Thyroid gland (tissue), 4 donors: ENCODE measurements at regions of chr9 and their contacts with region 1.

Region 1: GRCh38 chr9:109320742-109321448 is at the start of gene EPB41L4B:
- DNase-seq: peak; percentile 96
- H3K4me3 ChIP-seq: peak within 1 kb of the TSS; percentile 35 to 62 (median 59)
- H3K27ac ChIP-seq: peak within 1 kb of the TSS; percentile 89 to 97 (median 93)
- H3K4me1 ChIP-seq: peaks cover 25 to 27% of the 10 kb centered on the region in 2 donors
- H3K27me3 ChIP-seq: no peaks in the 10 kb centered on the region
- CTCF ChIP-seq: peak; percentile 83 to 100 (median 98)
- POLR2A ChIP-seq: peak in 1 of 2 donors; percentile 72
- total RNA-seq, gene EPB41L4B: 56.4 to 72.7 (median 71.0) TPM

Region 2: DNA sequence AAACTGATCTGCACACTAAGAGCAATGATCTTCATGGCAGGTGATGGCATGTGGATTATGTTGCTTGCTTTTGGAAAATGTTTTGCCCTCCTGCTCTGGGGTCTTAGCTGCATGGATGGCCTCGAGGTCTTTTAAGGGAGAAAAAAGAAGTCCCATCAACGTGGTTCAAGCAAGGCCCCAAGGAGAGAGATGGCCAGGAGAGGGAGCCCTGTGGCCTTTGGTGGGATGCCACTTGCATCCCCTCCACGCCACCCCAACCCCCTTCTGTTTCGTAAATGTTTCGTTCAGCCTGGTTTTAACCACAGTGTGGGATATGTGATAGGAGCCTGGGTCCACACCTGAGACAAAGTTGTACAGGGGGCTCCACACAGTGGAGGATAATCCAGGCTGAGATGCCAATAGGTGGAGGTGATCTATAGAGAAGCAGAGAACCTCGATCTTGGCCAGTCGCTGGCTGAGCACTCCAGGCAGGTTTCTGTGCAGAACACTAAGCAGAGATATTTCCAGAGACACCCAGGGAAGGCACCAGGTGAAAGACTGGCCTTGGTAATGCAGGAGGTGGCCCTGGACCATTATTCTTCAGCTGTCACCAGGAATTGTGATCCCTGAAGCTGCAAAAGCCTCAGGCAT is 128.0 kb before region 1 on chr9:
- intact Hi-C with region 1: loop called (anchors 5 kb)
- DNase-seq: peak; percentile 83 to 85
- H3K4me3 ChIP-seq: no peak overlapping the region
- H3K27ac ChIP-seq: no peak overlapping the region
- H3K4me1 ChIP-seq: peaks cover 0 to 3% of the 10 kb centered on the region in 2 donors
- H3K27me3 ChIP-seq: no peaks in the 10 kb centered on the region
- CTCF ChIP-seq: peak in 5 of 6 experiments; percentile 19 to 90 (median 78)
- POLR2A ChIP-seq: no peak

Region 3: DNA sequence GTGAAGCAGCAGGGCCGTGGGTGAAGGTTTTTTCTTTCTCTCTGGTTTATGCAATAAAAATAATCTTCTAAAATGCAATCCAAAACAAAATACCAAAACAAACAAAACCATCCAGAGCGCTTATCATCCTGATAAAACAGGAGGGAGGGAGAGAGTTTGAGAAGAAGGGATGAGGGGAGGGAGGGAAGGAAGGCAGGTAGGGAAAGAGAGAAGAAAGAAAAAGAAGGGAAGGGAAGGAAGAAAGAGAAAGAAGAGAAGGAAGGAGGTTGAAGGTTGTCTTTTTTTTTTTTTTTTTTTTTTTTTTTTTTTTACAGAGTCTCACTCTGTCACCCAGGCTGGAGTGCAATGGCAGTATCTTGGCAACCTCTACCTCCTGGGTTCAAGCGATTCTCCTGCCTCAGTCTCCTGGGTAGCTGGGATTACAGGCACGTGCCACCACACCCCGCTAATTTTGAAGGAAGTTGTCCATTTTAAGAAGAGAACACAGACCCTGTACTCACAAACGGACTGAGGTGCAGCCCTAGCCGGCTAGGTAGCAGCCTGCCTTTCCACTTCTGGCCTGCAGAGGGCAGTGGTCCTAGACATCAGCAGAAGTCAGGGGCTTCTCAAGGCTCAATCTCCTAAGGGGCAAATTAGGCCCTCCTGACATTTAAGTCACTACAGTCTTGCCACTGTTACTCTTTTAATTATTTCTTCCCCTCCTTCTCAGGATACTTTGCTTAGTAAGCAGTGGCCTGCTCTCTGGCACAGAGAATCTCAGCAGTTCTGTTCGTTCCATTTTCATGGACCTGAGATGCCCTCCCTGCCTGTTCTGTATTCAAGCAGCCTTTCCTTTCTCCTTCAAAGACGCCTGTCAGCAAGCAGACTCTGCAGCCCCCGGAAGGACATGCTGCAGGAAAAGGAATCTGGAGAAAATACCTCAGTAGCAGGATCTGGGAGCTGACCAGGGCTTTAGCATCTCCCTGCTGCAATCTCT is 76.5 kb before region 1 on chr9:
- intact Hi-C with region 1: loop called (anchors 5 kb)
- DNase-seq: peak; percentile 78 to 80
- H3K4me3 ChIP-seq: no peak overlapping the region
- H3K27ac ChIP-seq: peak overlapping the region in 2 of 3 donors; percentile 37 to 45
- H3K4me1 ChIP-seq: peaks cover 45 to 57% of the 10 kb centered on the region in 2 donors
- H3K27me3 ChIP-seq: no peaks in the 10 kb centered on the region
- CTCF ChIP-seq: peak; percentile 78 to 95 (median 84)
- POLR2A ChIP-seq: no peak